Transverse colon (tissue), 4 donors: ENCODE measurements at regions of chr3 and their contacts with region 1.

Region 1: GRCh38 chr3:9416139-9416780 is 18.8 kb downstream of the SETD5 start:
- DNase-seq: no peak
- H3K4me3 ChIP-seq: no peak overlapping the region
- H3K27ac ChIP-seq: peak overlapping the region in 1 of 4 donors; percentile 5
- H3K4me1 ChIP-seq: peaks cover 14 to 79% (median 36%) of the 10 kb centered on the region in 4 donors
- H3K27me3 ChIP-seq: no peaks in the 10 kb centered on the region
- CTCF ChIP-seq: no peak
- EP300 ChIP-seq: no peak
- POLR2A ChIP-seq: no peak

Region 2: GRCh38 chr3:9352917-9353752 is 63.1 kb before region 1 on chr3:
- in situ Hi-C with region 1: loop called in 1 of 4 experiments (anchors 10 kb)
- intact Hi-C with region 1: no loop called
- DNase-seq: peak; percentile 78
- H3K4me3 ChIP-seq: peak overlapping the region in 1 of 4 donors; percentile 11
- H3K27ac ChIP-seq: peak overlapping the region; percentile 56 to 82 (median 64)
- H3K4me1 ChIP-seq: peaks cover 3 to 32% (median 27%) of the 10 kb centered on the region in 4 donors
- H3K27me3 ChIP-seq: no peaks in the 10 kb centered on the region
- CTCF ChIP-seq: peak; percentile 80 to 92 (median 85)
- EP300 ChIP-seq: no peak
- POLR2A ChIP-seq: no peak

Region 3: DNA sequence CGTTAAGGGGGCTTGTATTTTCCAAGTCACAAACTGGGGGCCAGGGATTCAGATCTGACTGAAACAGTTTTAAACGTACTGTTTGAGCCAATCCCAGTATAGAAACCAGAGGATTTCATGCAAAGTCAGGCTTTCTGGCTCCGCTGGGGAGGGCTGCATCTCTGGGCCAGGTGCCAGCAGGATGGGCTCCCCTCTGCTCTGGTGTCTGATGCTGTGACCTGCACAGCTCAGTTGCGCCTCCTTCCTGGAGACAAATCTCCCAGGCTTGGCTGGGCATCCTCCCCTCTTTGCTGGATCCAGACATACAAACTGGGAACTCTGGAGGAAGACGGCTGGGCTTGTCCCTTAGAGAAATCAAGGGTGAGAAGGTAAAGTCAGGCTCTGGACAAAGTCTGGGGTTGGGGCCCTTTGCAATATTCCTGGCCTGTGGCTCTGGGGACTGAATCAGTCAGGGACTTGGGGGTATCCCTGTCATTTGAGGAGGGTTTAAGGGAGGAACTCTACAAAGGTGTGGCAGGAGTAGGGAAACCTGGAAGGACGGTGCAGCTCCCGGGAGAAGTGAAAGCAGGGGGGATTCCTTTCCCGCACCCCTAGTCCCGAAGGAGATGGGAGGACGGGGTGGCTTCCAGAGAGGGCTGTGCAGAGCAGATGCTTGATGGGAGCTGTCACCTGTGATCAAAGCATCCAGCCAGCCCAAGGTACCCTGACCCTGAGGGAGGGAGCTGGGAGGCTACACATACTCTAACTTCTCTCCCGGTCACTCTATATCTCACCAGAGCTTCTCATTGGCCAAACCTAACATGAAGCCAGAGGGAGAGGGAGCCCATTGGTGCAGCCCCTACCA is 1204.0 kb after region 1 on chr3:
- in situ Hi-C with region 1: no loop called
- intact Hi-C with region 1: no loop called
- DNase-seq: no peak
- H3K4me3 ChIP-seq: no peak overlapping the region
- H3K27ac ChIP-seq: no peak overlapping the region
- H3K4me1 ChIP-seq: no peaks in the 10 kb centered on the region
- H3K27me3 ChIP-seq: no peaks in the 10 kb centered on the region
- CTCF ChIP-seq: no peak
- EP300 ChIP-seq: no peak
- POLR2A ChIP-seq: no peak